HepG2 (cell line): ENCODE measurements at regions of chr3 and their contacts with region 1.

Region 1: GRCh38 chr3:52278510-52279069 is at the start of gene WDR82:
- DNase-seq: peak; percentile 78
- ATAC-seq: peak; percentile 89
- H3K4me3 ChIP-seq: peak within 1 kb of the TSS; percentile 77 to 99 (median 94)
- H3K27ac ChIP-seq: peak within 1 kb of the TSS; percentile 95
- H3K4me1 ChIP-seq: peaks cover 74% of the 10 kb centered on the region
- H3K27me3 ChIP-seq: no peaks in the 10 kb centered on the region; a peak in 1 of 5 replicates
- CTCF ChIP-seq: peak; percentile 65
- EP300 ChIP-seq: no peak
- POLR2A ChIP-seq: peak; percentile 84 to 93
- RAD21 ChIP-seq: peak; percentile 9; the same call in 1 of the 2 replicates
- total RNA-seq, gene WDR82: 59.5 and 62.0 TPM in 2 replicates

Region 2: DNA sequence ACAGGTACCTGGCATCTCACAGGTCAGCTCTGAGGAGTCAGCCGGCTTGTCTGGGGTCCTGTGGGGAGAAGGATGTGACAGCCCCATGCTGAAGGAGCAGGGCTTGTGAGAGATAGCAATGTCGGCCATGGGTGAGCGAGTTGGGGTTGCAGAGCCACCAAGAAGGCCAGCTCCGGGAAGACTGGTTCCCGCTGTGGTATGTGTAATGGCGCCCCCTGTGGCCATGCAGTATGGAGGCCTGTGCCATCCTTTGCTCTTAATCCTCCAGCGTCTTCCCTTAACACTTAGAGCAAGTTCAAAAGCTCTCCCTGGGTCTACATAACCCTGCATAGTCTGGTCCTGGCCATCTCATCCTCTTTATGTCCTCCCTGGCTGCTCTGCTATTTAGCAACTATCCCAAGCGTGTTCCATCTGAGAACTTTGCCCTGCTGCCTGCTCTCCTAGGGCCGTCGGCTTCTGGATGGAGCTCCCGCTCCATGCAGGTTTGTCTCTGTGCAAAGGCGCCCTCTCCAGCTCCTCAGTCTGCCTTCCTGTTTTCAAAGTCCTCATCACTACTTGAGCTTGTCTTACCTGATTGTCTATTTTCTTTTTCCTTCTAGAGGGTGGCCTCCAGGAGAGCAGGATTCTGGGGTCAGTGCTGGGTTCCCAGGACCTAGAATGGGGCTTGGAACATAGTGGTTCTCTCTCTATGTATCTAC is 458.7 kb before region 1 on chr3:
- CTCF ChIA-PET with region 1: no interaction called
- POLR2A ChIA-PET with region 1: no interaction called
- in situ Hi-C with region 1: no loop called
- intact Hi-C with region 1: loop called (anchors 10 kb)
- DNase-seq: peak; percentile 6
- ATAC-seq: peak; percentile 80
- H3K4me3 ChIP-seq: no peak overlapping the region
- H3K27ac ChIP-seq: no peak overlapping the region
- H3K4me1 ChIP-seq: no peaks in the 10 kb centered on the region
- H3K27me3 ChIP-seq: peaks cover 0 to 24% of the 10 kb centered on the region in 2 experiments; a peak in 3 of 5 replicates
- CTCF ChIP-seq: peak; percentile 44
- EP300 ChIP-seq: no peak
- POLR2A ChIP-seq: no peak
- RAD21 ChIP-seq: no peak

Region 3: DNA sequence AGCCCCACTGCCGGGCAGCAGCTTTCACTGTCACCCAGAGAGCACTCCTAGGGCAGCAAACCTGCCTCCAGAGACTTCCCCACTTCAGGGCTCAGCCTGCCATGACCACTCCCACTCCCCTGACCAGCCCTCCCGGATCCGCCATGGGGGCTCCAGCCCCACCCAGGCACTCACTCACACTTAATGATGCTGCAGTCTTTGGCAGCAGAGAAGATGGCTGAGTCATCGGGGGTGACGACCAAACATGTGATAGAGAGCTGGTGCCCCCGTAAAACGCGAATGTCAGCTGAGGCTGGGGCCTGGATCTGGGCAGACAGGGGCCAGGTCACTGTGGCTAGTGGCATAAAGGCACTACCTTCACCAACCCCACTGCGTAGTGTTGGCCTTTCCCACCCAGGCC is 341.6 kb before region 1 on chr3:
- CTCF ChIA-PET with region 1: no interaction called
- POLR2A ChIA-PET with region 1: no interaction called
- in situ Hi-C with region 1: no loop called
- intact Hi-C with region 1: no loop called
- DNase-seq: no peak
- ATAC-seq: no peak
- H3K4me3 ChIP-seq: no peak overlapping the region
- H3K27ac ChIP-seq: no peak overlapping the region
- H3K4me1 ChIP-seq: peaks cover 24% of the 10 kb centered on the region
- H3K27me3 ChIP-seq: no peaks in the 10 kb centered on the region; a peak in 1 of 5 replicates
- CTCF ChIP-seq: no peak
- EP300 ChIP-seq: no peak
- POLR2A ChIP-seq: no peak
- RAD21 ChIP-seq: no peak

Region 4: DNA sequence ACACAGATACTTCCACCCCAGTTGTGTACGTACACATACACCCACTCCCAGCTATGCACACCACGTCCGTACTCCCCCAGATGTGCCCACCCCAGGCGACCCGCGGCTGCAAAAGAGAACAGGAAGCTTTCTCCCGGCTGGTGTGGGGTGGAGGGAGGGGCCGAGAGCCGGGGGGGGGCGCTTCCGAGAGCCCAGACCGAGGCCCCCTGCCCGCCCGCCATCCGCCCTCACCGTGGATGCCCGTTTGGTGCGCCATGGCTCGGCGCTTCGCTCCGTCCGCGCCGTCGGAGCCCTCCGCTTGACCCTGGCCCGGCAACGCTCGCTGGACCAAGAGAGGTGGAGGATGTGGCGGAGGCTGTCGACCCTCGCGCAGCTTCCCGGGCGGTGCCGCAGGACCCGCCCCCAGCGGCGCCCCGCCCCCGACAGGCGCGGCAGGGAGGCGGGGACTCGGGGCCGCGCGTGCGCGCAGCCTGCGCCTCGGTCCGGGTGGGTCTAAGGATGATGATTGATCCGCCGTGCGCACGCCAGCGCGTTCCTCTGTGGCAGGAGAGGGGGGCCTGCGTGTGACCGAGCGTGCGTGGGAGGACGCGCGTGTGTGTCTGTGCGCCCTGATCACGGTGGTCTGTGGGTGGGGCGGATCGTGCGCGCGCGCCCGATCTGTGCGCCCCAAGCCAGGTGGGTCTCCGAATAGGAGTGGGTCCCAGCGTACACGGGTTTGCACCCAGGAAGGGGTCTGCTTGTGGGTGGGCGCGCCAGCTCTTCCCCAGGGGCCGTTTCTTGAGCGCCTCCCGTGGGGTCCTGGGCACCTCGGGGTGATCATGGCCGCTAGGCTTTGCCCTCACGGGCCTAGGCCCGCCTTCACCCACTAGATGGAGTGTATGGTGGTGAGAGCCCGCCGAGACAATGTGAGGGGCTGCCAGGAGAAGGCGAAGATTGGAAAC is 39.6 kb before region 1 on chr3 and contains the start of gene TWF2:
- CTCF ChIA-PET with region 1: no interaction called
- POLR2A ChIA-PET with region 1: interaction called, 126 read pairs
- in situ Hi-C with region 1: no loop called
- intact Hi-C with region 1: no loop called
- DNase-seq: peak; percentile 56
- ATAC-seq: peak; percentile 78
- H3K4me3 ChIP-seq: peak within 1 kb of the TSS; percentile 79 to 100 (median 98)
- H3K27ac ChIP-seq: peak within 1 kb of the TSS; percentile 68
- H3K4me1 ChIP-seq: peaks cover 53% of the 10 kb centered on the region
- H3K27me3 ChIP-seq: no peaks in the 10 kb centered on the region; a peak in 1 of 5 replicates
- CTCF ChIP-seq: peak; percentile 59
- EP300 ChIP-seq: no peak
- POLR2A ChIP-seq: no peak; a peak in 1 of 4 replicates
- RAD21 ChIP-seq: no peak
- total RNA-seq, gene TWF2: 45.5 and 49.1 TPM in 2 replicates

Region 5: GRCh38 chr3:52245322-52246263 is 33.0 kb before region 1 on chr3 and contains the start of gene PPM1M:
- CTCF ChIA-PET with region 1: no interaction called
- POLR2A ChIA-PET with region 1: interaction called, 13 read pairs
- in situ Hi-C with region 1: no loop called
- intact Hi-C with region 1: no loop called
- DNase-seq: no peak
- ATAC-seq: peak; percentile 41
- H3K4me3 ChIP-seq: peak within 1 kb of the TSS; percentile 44 to 62 (median 49); a peak in 5 of 6 replicates
- H3K27ac ChIP-seq: no peak within 1 kb of the TSS
- H3K4me1 ChIP-seq: peaks cover 42% of the 10 kb centered on the region
- H3K27me3 ChIP-seq: no peaks in the 10 kb centered on the region
- CTCF ChIP-seq: no peak
- EP300 ChIP-seq: no peak
- POLR2A ChIP-seq: no peak
- RAD21 ChIP-seq: no peak
- total RNA-seq, gene PPM1M: 1.5 and 2.5 TPM in 2 replicates

Region 6: GRCh38 chr3:52299879-52300611 is 21.5 kb after region 1 on chr3:
- CTCF ChIA-PET with region 1: no interaction called
- POLR2A ChIA-PET with region 1: interaction called, 36 read pairs
- in situ Hi-C with region 1: no loop called
- intact Hi-C with region 1: no loop called
- DNase-seq: peak; percentile 65
- ATAC-seq: peak; percentile 60
- H3K4me3 ChIP-seq: peak overlapping the region in 1 of 3 experiments; percentile 45; a peak in 1 of 6 replicates
- H3K27ac ChIP-seq: no peak overlapping the region
- H3K4me1 ChIP-seq: peaks cover 53% of the 10 kb centered on the region
- H3K27me3 ChIP-seq: no peaks in the 10 kb centered on the region
- CTCF ChIP-seq: peak; percentile 41; the same call in 1 of the 2 replicates
- EP300 ChIP-seq: no peak
- POLR2A ChIP-seq: peak in 1 of 2 experiments; percentile 53; a peak in 1 of 4 replicates
- RAD21 ChIP-seq: no peak

Region 7: DNA sequence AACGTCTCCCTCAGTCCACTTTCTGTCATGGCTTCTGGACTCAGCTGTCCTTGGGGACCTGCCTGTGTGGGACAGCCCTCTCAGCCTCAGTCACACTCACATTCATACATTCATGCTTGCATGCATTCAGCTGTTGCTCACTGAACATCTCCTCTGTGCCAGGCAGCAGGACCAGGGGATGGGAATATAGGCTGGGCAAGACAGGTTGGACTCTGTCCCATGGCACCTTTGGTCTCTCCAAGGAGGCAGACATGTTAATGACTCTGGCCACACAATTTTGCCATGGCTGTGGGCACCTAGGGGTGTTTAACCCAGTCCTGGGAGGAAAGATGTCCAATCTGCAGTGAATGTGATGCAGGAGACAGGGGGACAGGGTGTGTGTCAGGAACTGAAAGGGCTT is 29.7 kb after region 1 on chr3:
- CTCF ChIA-PET with region 1: no interaction called
- POLR2A ChIA-PET with region 1: interaction called, 11 read pairs
- in situ Hi-C with region 1: no loop called
- intact Hi-C with region 1: no loop called
- DNase-seq: no peak
- ATAC-seq: peak; percentile 21
- H3K4me3 ChIP-seq: no peak overlapping the region
- H3K27ac ChIP-seq: peak overlapping the region; percentile 56
- H3K4me1 ChIP-seq: peaks cover 61% of the 10 kb centered on the region
- H3K27me3 ChIP-seq: no peaks in the 10 kb centered on the region
- CTCF ChIP-seq: no peak
- EP300 ChIP-seq: no peak
- POLR2A ChIP-seq: no peak
- RAD21 ChIP-seq: no peak